ENCODE measurements at regions of chr16 and their contacts with region 1.

Region 1: DNA sequence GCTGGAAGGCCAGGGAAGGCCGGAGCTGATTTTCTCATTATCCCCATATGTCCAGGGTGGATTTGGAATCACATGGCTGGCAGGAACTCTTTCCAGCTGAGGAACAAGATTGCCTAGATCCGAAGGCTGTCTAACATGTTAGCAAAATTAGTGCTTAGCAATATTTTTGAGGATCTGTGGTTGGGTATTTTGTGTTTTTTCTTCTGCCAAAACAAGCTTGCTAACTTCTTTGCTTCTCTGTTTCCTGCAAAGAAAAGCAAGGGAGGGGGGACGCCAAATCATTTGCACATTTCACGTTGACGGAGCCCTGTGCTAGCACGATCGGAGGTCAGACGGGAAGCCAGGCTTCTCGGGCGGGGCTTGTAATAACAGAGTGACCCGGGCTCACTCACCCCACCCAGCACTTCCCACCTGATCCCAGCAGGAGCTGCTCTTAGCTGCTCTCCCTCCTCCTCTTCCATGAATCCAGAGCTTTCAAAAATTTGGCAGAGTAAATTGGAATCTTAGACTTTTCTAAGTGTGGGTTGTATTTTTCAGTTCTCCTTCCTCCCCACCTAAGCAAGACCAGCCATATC is 33.3 kb upstream of the FOXF1 start:
- DNase-seq: no peak

Region 2: GRCh38 chr16:85799497-85800337 is 677.3 kb before region 1 on chr16 and contains the starts of genes COX4I1 and EMC8:
- intact Hi-C with region 1: no loop called
- DNase-seq: peak; percentile 99
- total RNA-seq, gene COX4I1: 273 to 322 TPM
- total RNA-seq, gene EMC8: 17.4 to 19.4 TPM

Region 3: GRCh38 chr16:86107215-86107825 is 369.7 kb before region 1 on chr16:
- intact Hi-C with region 1: loop called in 1 of 2 experiments (anchors 5 kb)
- DNase-seq: no peak

Region 4: GRCh38 chr16:86300746-86301481 is 176.1 kb before region 1 on chr16:
- intact Hi-C with region 1: no loop called
- DNase-seq: no peak

Region 5: GRCh38 chr16:86517652-86518258 is 40.7 kb after region 1 on chr16:
- intact Hi-C with region 1: no loop called
- DNase-seq: peak; percentile 88